ENCODE measurements at regions of chr20 and their contacts with region 1.

Region 1: DNA sequence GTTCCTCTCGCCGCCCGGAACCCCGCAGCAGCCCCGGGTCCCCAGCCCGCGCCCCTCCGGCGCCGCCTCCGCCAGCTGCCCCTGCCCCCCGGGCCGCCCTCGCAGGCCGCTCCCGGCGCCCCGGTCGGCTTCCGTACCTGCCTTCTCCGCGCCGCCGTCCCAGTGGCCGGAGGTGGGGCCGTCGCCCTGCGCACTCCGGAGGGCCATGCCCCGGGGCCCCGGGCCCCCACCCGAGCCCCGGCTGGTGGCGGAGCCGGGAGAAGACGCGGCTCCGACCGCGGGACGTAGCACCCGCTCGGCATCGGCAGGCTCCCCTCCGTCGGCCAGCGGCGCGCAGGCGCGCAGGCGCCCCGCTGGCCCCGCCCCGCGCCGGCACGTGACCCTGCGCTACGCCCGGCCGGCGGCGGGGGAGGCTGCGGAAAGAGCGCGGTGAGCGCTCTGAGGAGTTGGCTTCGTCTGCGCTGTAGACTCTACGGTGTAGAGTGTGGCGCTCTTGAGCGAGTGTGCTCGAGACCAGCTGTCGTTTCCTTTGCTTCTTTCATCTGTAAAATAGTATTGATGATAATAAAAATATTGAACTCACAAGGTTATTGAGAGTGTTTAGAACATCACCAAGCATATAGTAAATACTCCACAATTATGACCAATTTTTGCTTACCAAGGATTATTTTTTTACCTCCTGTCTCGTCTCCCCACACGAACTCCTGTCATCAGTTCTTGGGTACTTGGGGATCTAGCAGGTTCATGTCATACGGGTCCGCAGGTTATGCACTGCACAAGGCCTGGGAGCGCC is at the start of gene TBC1D20:
- DNase-seq: no peak
- H3K4me3 ChIP-seq: peak within 1 kb of the TSS; percentile 68 to 86 (median 76)
- H3K27ac ChIP-seq: peak within 1 kb of the TSS; percentile 89 to 98 (median 96)
- H3K4me1 ChIP-seq: peaks cover 33 to 49% (median 41%) of the 10 kb centered on the region in 4 donors
- H3K27me3 ChIP-seq: no peaks in the 10 kb centered on the region
- CTCF ChIP-seq: peak in 2 of 3 experiments; percentile 9 to 17
- EP300 ChIP-seq: no peak
- POLR2A ChIP-seq: no peak
- total RNA-seq, gene TBC1D20: 34.9 to 47.7 (median 41.7) TPM

Region 2: DNA sequence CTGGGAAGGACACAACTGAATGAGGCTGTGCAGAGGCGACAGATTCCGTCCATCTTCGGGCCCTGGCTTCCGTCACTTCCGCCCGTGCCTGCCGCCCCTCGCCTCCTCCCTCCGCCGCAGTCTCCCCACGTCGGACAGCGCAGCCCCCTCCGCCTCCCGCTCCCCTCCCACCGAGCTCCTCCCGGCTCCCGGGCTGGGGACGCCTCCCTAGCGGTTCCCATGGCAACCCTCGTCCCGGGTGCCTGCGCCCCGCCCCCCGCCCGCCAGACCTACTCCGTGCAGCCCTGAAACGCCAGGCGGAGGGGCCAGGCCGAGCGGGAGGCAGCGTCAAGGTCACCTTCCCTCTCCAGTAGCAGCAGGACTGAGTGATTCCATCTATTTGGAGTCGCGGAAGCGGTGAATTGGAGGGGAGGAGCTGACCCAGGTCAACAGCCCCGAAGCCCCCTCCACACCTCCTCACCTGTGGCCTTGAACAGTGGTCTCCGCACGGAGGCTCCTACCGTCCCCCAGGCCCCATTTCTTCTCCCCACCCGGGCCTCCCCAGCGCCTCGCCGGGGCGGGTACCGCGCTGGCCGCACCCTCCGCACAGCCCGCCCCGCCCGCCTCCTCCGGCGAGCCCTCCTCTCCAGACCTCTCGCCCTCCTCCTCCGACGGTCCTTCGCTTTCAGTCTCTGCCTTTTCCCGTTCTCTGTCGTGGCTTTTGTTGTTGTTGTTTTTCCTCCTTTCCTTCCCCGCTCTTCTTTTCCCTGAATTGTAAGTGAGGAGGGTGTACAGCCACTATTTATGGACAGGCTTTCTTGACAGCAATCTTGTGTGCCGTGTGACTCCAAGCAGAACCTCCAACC is 114.5 kb before region 1 on chr20:
- intact Hi-C with region 1: loop called (anchors 2 kb)
- DNase-seq: peak; percentile 96
- H3K4me3 ChIP-seq: peak overlapping the region; percentile 69 to 94 (median 76)
- H3K27ac ChIP-seq: peak overlapping the region; percentile 90 to 96 (median 94)
- H3K4me1 ChIP-seq: peaks cover 15 to 34% (median 28%) of the 10 kb centered on the region in 4 donors
- H3K27me3 ChIP-seq: no peaks in the 10 kb centered on the region
- CTCF ChIP-seq: no peak
- EP300 ChIP-seq: no peak
- POLR2A ChIP-seq: no peak

Region 3: GRCh38 chr20:407133-407952 is 55.1 kb before region 1 on chr20:
- intact Hi-C with region 1: loop called (anchors 5 kb)
- DNase-seq: no peak
- H3K4me3 ChIP-seq: peak overlapping the region; percentile 78 to 99 (median 92)
- H3K27ac ChIP-seq: peak overlapping the region; percentile 82 to 97 (median 95)
- H3K4me1 ChIP-seq: peaks cover 16 to 31% (median 29%) of the 10 kb centered on the region in 4 donors
- H3K27me3 ChIP-seq: no peaks in the 10 kb centered on the region
- CTCF ChIP-seq: peak in 2 of 3 experiments; percentile 5 to 6
- EP300 ChIP-seq: no peak
- POLR2A ChIP-seq: no peak

Region 4: GRCh38 chr20:588932-589672 is 126.7 kb after region 1 on chr20:
- intact Hi-C with region 1: no loop called
- DNase-seq: no peak
- H3K4me3 ChIP-seq: no peak overlapping the region
- H3K27ac ChIP-seq: no peak overlapping the region
- H3K4me1 ChIP-seq: peaks cover 0 to 15% (median 10%) of the 10 kb centered on the region in 4 donors
- H3K27me3 ChIP-seq: peaks cover 0 to 28% (median 0%) of the 10 kb centered on the region in 4 donors
- CTCF ChIP-seq: no peak
- EP300 ChIP-seq: no peak
- POLR2A ChIP-seq: no peak

Region 5: DNA sequence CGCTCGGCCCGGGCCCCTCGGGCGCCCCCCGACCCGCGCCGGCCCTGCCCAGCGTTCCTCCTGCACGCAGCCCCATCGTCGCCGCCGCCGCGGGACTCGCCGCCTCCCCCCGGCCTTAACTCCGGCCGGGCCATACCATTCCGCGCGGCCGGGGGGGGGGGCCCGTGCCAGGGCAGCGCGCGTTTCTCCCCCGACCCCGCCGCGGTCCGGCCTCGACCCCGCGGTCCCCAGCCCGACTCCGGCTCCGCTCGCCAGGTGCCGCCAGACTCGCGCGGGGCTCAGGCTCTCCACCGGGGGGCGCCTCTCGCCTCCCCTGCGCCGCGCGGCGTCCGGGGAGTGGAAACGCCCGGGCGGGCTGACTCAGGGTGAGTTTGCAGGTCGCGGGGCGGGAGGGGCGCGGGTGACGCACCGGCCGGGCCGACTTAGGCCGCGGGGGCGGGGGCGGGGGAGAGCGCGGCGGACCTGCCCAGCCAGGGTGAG is 190.8 kb after region 1 on chr20 and contains the start of gene SRXN1:
- intact Hi-C with region 1: loop called (anchors 5 kb)
- DNase-seq: peak; percentile 96
- H3K4me3 ChIP-seq: peak within 1 kb of the TSS; percentile 77 to 95 (median 84)
- H3K27ac ChIP-seq: peak within 1 kb of the TSS; percentile 81 to 90 (median 88)
- H3K4me1 ChIP-seq: peaks cover 18 to 36% (median 28%) of the 10 kb centered on the region in 4 donors
- H3K27me3 ChIP-seq: peaks cover 0 to 2% (median 0%) of the 10 kb centered on the region in 4 donors
- CTCF ChIP-seq: peak; percentile 54 to 58 (median 56)
- EP300 ChIP-seq: no peak
- POLR2A ChIP-seq: no peak
- total RNA-seq, gene SRXN1: 37.0 to 58.2 (median 41.4) TPM

Measured in esophagus muscularis mucosa (tissue), 4 donors.